ENCODE measurements at regions of chr1 and their contacts with region 1.

Region 1: DNA sequence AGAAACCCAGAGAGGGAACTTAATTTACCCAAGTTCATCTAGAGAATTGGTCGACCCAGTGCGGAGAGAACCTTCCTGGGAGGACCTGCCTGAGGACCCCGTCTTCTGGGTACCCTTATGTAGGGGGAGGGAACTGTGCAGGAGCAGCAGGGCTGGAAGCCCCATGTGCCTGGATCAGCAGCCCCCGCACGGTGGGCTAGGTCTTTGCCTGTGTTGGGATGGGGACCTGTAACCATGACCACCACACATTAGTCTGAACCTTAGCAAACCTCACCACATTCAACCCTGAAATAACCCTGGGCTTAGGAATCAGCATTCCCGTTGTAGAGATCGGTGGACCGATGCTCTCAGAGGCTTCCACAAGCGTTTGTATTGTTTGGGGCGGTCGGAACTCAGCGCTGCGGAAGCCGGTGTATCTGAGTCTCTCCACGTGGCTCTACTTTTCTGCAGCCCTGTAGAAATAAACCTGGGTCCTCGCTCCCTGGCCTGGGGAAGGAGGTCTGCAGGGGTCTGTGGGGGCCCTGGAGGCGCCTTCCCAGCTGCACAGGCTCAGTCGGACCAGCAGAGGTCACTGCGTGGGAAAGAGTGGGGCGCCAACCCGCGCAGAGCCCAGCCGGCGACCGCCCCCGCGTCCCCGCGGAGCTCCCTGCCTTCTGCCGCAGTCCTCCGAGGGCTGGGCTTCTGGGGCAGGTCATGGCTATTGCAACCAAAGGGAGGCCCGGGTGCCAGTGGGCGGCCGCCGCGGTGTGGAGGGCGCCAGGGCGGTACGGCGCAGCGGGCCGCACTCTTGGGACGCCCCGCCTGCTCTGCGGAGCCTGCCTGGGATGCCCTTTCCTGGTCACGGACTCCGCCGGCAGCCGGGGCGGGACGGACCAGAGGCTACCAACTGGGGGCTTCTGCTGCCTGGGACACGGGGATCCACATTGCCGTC is 36.2 kb upstream of the KCNA10 start:
- DNase-seq: peak; percentile 78
- ATAC-seq: peak; percentile 93

Region 2: DNA sequence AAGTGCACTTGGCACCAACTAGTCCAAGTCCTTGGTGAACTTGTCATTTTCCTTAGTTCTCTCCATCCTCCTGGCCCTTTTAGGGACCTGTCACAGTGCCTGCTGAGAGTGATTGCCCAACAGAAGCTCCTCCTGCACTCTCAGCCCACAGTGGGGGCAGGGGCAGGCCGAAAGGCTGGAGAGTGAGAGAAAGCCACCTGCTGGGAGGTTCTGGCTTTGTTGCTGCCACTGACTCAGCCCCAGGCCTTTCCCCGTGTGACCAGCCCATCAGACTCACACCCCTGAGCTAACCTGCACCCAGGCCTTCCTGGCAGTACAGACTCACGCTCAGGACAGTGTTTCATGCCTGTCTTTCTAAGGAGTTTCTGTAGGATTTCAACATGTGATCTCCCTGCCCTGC is 121.3 kb before region 1 on chr1:
- intact Hi-C with region 1: no loop called
- DNase-seq: peak; percentile 61
- ATAC-seq: peak; percentile 95

Region 3: DNA sequence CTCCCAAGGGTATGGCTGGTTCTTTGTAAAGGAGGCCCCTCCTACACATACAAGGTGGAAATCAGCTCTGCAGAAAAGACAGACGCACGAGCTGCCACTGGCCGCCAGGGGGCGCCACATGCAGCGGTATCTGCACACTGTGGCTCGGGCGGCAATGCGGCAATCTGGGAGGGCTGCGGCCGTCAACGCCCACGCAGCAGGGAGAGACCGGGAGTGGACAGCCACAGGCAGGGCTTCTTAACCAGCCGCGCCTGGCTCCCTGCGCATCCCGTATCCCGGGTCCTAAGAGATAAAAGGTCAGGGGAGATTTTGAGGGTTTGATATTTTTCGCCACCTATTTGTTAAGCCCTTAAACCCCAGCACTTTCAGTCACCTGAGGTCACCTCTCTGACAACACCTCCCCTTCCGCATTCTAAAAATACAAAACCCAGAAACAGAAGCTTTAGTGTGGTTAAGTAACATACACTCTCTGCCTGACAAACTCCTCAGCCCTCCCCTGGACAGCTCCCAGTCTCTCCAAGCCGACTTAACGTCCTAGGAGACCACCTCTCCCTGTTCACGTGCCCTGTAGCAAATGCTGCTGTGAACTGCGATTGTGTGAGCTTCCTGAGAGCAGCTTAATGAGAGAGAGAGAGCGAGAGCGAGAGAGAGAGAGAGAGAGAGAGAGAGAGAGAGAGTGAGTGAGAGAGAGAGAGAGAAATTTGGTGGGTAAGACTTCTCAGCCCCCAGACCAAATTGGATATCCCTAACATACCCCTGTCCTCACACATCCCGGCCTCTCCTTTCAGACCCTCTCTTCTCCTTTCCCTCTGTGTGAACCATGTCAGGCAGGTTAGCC is 64.5 kb after region 1 on chr1:
- intact Hi-C with region 1: loop called (anchors 10 kb)
- DNase-seq: peak; percentile 89
- ATAC-seq: peak; percentile 91

Measured in left ventricle myocardium superior (tissue), 1 donor.